ENCODE measurements at regions of chr15 and their contacts with region 1.

Region 1: GRCh38 chr15:41811432-41812195 is 16.3 kb upstream of the JMJD7 start:
- DNase-seq: peak; percentile 89
- ATAC-seq: peak; percentile 90

Region 2: GRCh38 chr15:41774062-41774881 is 37.3 kb before region 1 on chr15 and contains the start of gene MAPKBP1:
- intact Hi-C with region 1: loop called (anchors 5 kb)
- DNase-seq: peak; percentile 98
- ATAC-seq: peak; percentile 96
- total RNA-seq, gene MAPKBP1: 17.0 TPM

Region 3: GRCh38 chr15:41917767-41918430 is 106.3 kb after region 1 on chr15:
- intact Hi-C with region 1: no loop called
- DNase-seq: peak; percentile 79
- ATAC-seq: peak; percentile 62

Measured in left ventricle myocardium superior (tissue), 1 donor.